Heart left ventricle (tissue), 16 donors: ENCODE measurements at regions of chr22 and their contacts with region 1.

Region 1: GRCh38 chr22:43014869-43015676 is at the start of gene PACSIN2:
- DNase-seq: peak; percentile 100
- ATAC-seq: peak; percentile 99 to 100 (median 100)
- H3K4me3 ChIP-seq: peak within 1 kb of the TSS; percentile 65 to 97 (median 79)
- H3K27ac ChIP-seq: peak within 1 kb of the TSS; percentile 26 to 82 (median 68)
- H3K4me1 ChIP-seq: peaks cover 0 to 37% (median 11%) of the 10 kb centered on the region in 12 donors
- H3K27me3 ChIP-seq: no peaks in the 10 kb centered on the region
- CTCF ChIP-seq: no peak
- POLR2A ChIP-seq: peak; percentile 79 to 97
- total RNA-seq, gene PACSIN2: 42.5 to 87.1 (median 59.3) TPM

Region 2: DNA sequence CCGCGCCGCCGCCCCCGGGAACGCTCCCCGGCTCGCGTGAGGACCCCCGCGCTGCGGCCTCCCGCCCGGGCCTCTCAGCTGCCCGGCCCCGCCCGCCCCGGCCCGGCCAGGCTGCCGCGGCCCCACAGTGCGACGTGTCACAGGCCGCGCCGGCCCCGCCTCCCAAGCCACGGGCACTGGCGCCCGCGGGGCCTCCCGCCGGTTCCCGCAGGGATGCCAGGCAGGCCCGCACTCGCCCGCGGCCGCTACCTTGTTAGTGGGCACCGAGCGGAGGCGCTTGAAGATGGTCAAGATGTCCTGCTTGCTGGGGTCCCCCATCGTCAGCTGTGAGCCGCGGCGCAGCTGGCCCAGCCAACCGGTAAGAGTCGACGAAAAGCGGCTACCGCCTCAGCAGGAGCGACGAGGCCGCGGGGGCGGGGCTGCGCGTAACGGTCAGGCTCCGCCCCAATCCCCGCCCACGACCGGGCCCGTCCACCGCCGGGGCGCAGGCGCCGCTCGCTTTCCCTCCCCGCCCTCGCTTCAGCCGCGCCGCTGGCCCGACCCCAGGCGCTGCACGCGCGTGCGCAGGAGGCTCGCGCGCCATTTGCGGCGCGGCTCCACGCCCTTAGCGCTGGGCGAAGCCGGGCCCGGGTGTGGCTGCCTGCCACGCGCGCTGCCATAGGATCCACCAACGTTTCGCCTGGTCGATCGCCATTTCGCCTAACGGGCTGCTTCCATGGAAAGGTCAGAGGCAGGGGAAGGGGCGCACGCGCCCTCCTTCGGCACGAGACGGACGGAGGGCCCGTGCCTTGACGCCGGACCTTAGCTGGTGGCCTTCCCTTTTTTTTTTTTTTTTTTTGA is 158.0 kb before region 1 on chr22 and contains the start of gene ARFGAP3:
- intact Hi-C with region 1: loop called in 1 of 10 experiments (anchors 2 kb)
- DNase-seq: peak; percentile 94 to 98 (median 96)
- ATAC-seq: peak; percentile 90 to 98 (median 96)
- H3K4me3 ChIP-seq: peak within 1 kb of the TSS; percentile 72 to 95 (median 90)
- H3K27ac ChIP-seq: peak within 1 kb of the TSS; percentile 87 to 98 (median 98)
- H3K4me1 ChIP-seq: peaks cover 0 to 35% (median 18%) of the 10 kb centered on the region in 12 donors
- H3K27me3 ChIP-seq: no peaks in the 10 kb centered on the region
- CTCF ChIP-seq: no peak
- POLR2A ChIP-seq: peak; percentile 27 to 92
- total RNA-seq, gene ARFGAP3: 15.4 to 30.9 (median 25.1) TPM

Region 3: GRCh38 chr22:42901790-42902508 is 113.1 kb before region 1 on chr22:
- intact Hi-C with region 1: loop called in 3 of 10 experiments (anchors 5 to 10 kb)
- DNase-seq: peak in 4 of 5 donors; percentile 63 to 86 (median 79)
- ATAC-seq: peak; percentile 67 to 86 (median 84)
- H3K4me3 ChIP-seq: no peak overlapping the region
- H3K27ac ChIP-seq: peak overlapping the region in 11 of 12 donors; percentile 50 to 87 (median 67)
- H3K4me1 ChIP-seq: peaks cover 7 to 82% (median 63%) of the 10 kb centered on the region in 12 donors
- H3K27me3 ChIP-seq: no peaks in the 10 kb centered on the region
- CTCF ChIP-seq: peak in 5 of 12 donors; percentile 5 to 28 (median 15)
- POLR2A ChIP-seq: no peak

Region 4: DNA sequence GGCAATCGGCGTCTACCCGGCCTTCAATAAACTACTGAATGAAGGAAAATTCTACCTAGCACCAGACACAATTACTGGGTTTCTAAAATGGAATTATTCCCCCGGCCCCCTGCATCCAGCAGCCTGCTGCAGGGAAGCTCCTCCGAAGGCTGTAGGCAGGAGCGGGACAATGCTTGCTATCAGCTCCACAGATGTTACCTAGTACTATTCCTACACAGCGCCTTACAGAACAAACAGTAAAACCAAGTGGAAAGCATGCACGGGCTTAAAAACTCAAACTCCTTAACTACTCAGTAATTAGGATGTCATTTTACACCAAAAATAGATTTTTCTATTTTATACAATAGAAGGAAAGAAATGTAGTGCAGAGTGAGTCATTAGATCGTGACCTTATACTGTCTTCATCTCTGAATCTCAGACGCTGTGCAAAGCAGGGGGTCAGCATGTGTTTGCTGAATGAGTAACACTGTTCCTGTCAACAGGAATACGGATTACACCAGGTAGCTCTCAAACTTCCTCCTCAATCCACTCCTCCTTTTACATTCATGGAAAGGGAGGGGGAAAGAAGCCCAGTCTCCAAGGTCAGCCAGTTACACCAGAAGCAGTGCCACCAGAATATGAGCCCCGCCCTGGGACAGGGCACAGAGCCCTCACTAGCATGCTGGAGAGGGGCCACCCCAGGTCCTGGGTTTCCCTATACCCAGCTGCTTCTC is 75.0 kb before region 1 on chr22:
- intact Hi-C with region 1: loop called in 1 of 10 experiments (anchors 10 kb)
- DNase-seq: peak in 1 of 5 donors; percentile 55
- ATAC-seq: peak; percentile 32 to 64 (median 56)
- H3K4me3 ChIP-seq: peak overlapping the region in 1 of 12 donors; percentile 25
- H3K27ac ChIP-seq: peak overlapping the region; percentile 23 to 93 (median 78)
- H3K4me1 ChIP-seq: peaks cover 26 to 98% (median 82%) of the 10 kb centered on the region in 12 donors
- H3K27me3 ChIP-seq: no peaks in the 10 kb centered on the region
- CTCF ChIP-seq: no peak
- POLR2A ChIP-seq: no peak

Region 5: GRCh38 chr22:42978453-42979103 is 36.5 kb before region 1 on chr22:
- intact Hi-C with region 1: no loop called
- DNase-seq: peak in 2 of 5 donors; percentile 33 to 52
- ATAC-seq: peak; percentile 65 to 97 (median 82)
- H3K4me3 ChIP-seq: no peak overlapping the region
- H3K27ac ChIP-seq: peak overlapping the region in 11 of 12 donors; percentile 15 to 76 (median 59)
- H3K4me1 ChIP-seq: peaks cover 0 to 49% (median 34%) of the 10 kb centered on the region in 12 donors
- H3K27me3 ChIP-seq: no peaks in the 10 kb centered on the region
- CTCF ChIP-seq: no peak
- POLR2A ChIP-seq: no peak